Natural killer cell (primary cell): ENCODE measurements at regions of chr3 and their contacts with region 1.

Region 1: DNA sequence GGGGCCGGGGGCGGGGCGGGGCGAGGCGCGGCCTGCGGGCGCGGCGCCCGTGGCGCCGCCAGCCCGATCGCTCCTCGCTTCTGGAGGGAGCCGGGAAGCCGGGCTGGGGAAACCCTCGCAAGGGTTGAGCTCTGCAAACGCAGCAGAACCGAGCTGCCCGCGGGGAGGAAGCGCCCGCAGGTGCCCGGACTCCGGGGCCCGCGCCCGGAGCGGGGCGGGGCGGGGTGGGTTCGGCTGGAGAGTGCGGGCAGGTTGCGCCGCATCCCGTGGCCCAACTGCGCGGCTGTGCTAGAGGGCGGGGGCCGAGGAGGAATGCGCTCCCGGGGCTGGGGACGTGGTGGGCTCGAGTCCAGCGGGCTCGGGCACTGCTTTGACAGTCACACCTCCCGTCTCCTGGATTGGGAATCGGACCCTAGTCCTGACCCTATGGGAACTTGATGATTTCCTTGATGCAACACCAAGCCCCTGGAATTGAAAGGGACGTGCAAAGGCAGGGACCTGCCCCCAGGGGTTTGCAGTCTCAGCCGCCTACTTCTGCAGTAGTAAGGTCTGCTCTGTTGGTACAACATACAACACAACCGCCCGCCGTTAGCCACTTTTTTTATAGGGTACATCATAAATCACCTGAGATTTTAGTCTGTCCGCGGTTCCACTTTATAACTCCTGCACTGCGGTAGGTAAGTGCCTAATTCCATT is 34.3 kb downstream of the ZBTB38 start:
- DNase-seq: peak; percentile 44 to 67
- ATAC-seq: peak; percentile 60 to 70 (median 62)
- H3K4me3 ChIP-seq: peak overlapping the region; percentile 66
- H3K4me3 Mint-ChIP-seq: peak overlapping the region; percentile 86
- H3K27ac ChIP-seq: peak overlapping the region; percentile 48
- H3K27ac Mint-ChIP-seq: peak overlapping the region; percentile 85 to 89
- H3K4me1 ChIP-seq: peaks cover 19% of the 10 kb centered on the region
- H3K4me1 Mint-ChIP-seq: peaks cover 37 to 38% of the 10 kb centered on the region in 2 donors
- H3K27me3 ChIP-seq: no peaks in the 10 kb centered on the region
- H3K27me3 Mint-ChIP-seq: no peaks in the 10 kb centered on the region
- CTCF ChIP-seq: no peak

Region 2: GRCh38 chr3:141441381-141442364 is 39.0 kb after region 1 on chr3:
- intact Hi-C with region 1: loop called (anchors 5 kb)
- DNase-seq: peak; percentile 42 to 86
- ATAC-seq: peak; percentile 95 to 100 (median 96)
- H3K4me3 ChIP-seq: no peak overlapping the region
- H3K4me3 Mint-ChIP-seq: peak overlapping the region; percentile 74
- H3K27ac ChIP-seq: peak overlapping the region; percentile 11
- H3K27ac Mint-ChIP-seq: peak overlapping the region; percentile 36 to 79
- H3K4me1 ChIP-seq: peaks cover 10% of the 10 kb centered on the region
- H3K4me1 Mint-ChIP-seq: peaks cover 26 to 37% of the 10 kb centered on the region in 2 donors
- H3K27me3 ChIP-seq: no peaks in the 10 kb centered on the region
- H3K27me3 Mint-ChIP-seq: no peaks in the 10 kb centered on the region
- CTCF ChIP-seq: peak; percentile 61